Calu3 (cell line): ENCODE measurements at regions of chr10 and their contacts with region 1.

Region 1: GRCh38 chr10:71974489-71975021 is 10.4 kb downstream of the CHST3 start:
- DNase-seq: peak; percentile 66
- H3K4me3 Mint-ChIP-seq: peak overlapping the region; percentile 11
- H3K27ac Mint-ChIP-seq: peak overlapping the region; percentile 79
- H3K4me1 Mint-ChIP-seq: peaks cover 77% of the 10 kb centered on the region
- H3K27me3 Mint-ChIP-seq: no peaks in the 10 kb centered on the region
- CTCF ChIP-seq: no peak

Region 2: DNA sequence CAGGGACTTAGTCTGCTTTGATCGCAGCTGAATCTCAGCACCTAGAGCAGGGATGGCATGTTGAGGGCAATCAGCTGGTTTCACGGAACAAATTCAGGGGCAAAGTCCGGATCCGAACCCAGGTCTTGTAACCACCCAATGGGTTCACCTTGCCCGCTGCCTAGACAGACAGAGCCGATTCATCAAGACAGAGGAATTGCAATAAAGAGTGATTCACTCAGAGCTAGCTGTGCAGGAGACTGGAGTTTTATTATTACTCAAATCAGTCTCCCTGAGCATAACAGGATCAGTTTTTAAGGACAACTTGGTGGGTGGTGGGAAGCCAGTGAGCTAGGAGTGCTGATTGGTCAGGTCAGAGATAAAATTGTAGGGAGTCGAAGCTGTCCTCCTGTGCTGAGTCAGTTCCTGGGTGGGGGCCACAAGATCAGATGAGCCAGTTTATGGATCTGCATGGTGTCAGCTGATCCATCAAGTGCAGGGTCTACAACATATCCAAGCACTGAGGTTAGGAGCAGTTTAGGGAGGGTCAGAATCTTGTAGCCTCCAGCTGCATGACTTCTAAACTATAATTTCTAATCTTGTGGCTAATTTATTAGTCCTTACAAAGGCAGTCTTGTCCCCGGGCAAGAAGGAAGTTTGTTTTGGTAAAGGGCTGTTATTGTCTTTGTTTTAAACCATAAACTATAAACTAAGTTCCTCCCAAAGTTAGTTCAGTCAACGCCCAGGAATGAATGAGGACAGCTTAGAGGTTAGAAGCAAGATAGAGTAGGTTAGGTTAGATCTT is 53.8 kb before region 1 on chr10:
- CTCF ChIA-PET with region 1: no interaction called
- intact Hi-C with region 1: loop called (anchors 1 kb)
- DNase-seq: no peak
- H3K4me3 Mint-ChIP-seq: peak overlapping the region; percentile 4
- H3K27ac Mint-ChIP-seq: no peak overlapping the region
- H3K4me1 Mint-ChIP-seq: peaks cover 25% of the 10 kb centered on the region
- H3K27me3 Mint-ChIP-seq: no peaks in the 10 kb centered on the region
- CTCF ChIP-seq: no peak

Region 3: GRCh38 chr10:71957546-71958275 is 16.8 kb before region 1 on chr10:
- CTCF ChIA-PET with region 1: interaction called, 11 read pairs
- intact Hi-C with region 1: no loop called
- DNase-seq: no peak
- H3K4me3 Mint-ChIP-seq: no peak overlapping the region
- H3K27ac Mint-ChIP-seq: no peak overlapping the region
- H3K4me1 Mint-ChIP-seq: peaks cover 14% of the 10 kb centered on the region
- H3K27me3 Mint-ChIP-seq: peaks cover 16% of the 10 kb centered on the region
- CTCF ChIP-seq: no peak

Region 4: DNA sequence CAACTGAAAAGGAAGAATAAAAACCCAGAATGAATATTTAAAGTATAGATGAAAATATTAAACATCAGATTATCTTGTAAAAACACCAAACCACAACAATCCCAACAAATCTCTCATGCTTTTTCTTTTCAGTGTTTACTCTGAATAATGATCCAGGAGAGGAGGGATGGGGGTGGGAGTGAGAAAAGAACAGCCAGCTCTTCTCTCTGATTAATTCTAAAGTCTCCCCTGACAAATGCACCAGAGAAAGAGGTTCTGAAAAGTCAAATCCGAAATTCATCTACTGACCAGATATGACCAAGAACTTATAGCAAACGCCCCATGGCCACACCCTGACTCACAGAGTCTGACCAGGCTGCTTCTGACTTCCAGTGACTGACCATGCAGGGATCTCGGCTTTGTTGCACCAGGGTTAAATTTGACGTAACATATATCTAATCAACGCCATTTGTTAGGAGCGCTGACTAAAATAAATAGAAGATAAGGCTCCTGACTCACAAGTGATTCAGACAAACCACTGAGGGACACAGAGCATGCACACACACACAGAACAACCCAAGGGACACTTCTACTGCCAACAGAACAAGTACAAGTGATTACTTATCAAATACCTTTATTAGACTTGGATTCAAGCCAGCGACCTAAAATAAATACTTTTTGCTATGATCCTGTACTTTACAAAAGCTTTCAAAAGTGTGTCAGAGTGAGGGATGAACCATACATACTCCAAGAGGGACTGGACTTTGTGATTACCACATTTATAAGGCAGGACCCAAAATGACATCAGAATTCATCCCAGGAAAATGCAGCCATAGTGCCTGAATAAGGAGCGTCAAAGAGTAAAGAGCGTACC is 123.1 kb after region 1 on chr10:
- CTCF ChIA-PET with region 1: no interaction called
- intact Hi-C with region 1: loop called (anchors 2 kb)
- DNase-seq: peak; percentile 81
- H3K4me3 Mint-ChIP-seq: peak overlapping the region; percentile 44
- H3K27ac Mint-ChIP-seq: peak overlapping the region; percentile 97
- H3K4me1 Mint-ChIP-seq: peaks cover 65% of the 10 kb centered on the region
- H3K27me3 Mint-ChIP-seq: no peaks in the 10 kb centered on the region
- CTCF ChIP-seq: no peak